K562 (cell line): ENCODE measurements at regions of chr10 and their contacts with region 1.

Region 1: GRCh38 chr10:110210674-110211464 is 3.5 kb downstream of the MXI1 start:
- DNase-seq: peak; percentile 89 to 97 (median 94)
- ATAC-seq: peak; percentile 70
- H3K4me3 ChIP-seq: peak overlapping the region; percentile 59
- H3K27ac ChIP-seq: peak overlapping the region; percentile 93
- H3K4me1 ChIP-seq: peaks cover 30 to 40% of the 10 kb centered on the region in 2 experiments; a peak in 4 of 5 replicates
- H3K27me3 ChIP-seq: no peaks in the 10 kb centered on the region
- CTCF ChIP-seq: no peak
- EP300 ChIP-seq: no peak
- POLR2A ChIP-seq: peak; percentile 63
- RAD21 ChIP-seq: 0 out of 4 replicates have a peak, but pooled peaks of 1 of the 2 experiments have one; percentile 2

Region 2: GRCh38 chr10:109883859-109884771 is 326.8 kb before region 1 on chr10:
- CTCF ChIA-PET with region 1: no interaction called
- POLR2A ChIA-PET with region 1: no interaction called
- in situ Hi-C with region 1: no loop called
- intact Hi-C with region 1: no loop called
- DNase-seq: peak; percentile 74 to 83 (median 74)
- ATAC-seq: peak; percentile 96
- H3K4me3 ChIP-seq: no peak overlapping the region
- H3K27ac ChIP-seq: no peak overlapping the region; the same call in 2 of the 3 replicates
- H3K4me1 ChIP-seq: peaks cover 0 to 3% of the 10 kb centered on the region in 2 experiments; a peak in 2 of 5 replicates
- H3K27me3 ChIP-seq: no peaks in the 10 kb centered on the region
- CTCF ChIP-seq: peak; percentile 88 to 94 (median 92)
- EP300 ChIP-seq: no peak
- POLR2A ChIP-seq: no peak
- RAD21 ChIP-seq: peak; percentile 78 to 85

Region 3: GRCh38 chr10:110007701-110008517 is 203.0 kb before region 1 on chr10 and contains the start of gene ADD3:
- CTCF ChIA-PET with region 1: no interaction called
- POLR2A ChIA-PET with region 1: no interaction called
- in situ Hi-C with region 1: no loop called
- intact Hi-C with region 1: loop called (anchors 10 kb)
- DNase-seq: peak; percentile 94 to 97 (median 96)
- ATAC-seq: peak; percentile 82
- H3K4me3 ChIP-seq: peak within 1 kb of the TSS; percentile 92
- H3K27ac ChIP-seq: peak within 1 kb of the TSS; percentile 92
- H3K4me1 ChIP-seq: peaks cover 15 to 32% of the 10 kb centered on the region in 2 experiments
- H3K27me3 ChIP-seq: no peaks in the 10 kb centered on the region
- CTCF ChIP-seq: no peak
- EP300 ChIP-seq: no peak
- POLR2A ChIP-seq: peak; percentile 66; the same call in 1 of the 2 replicates
- RAD21 ChIP-seq: no peak
- polyA plus RNA-seq, gene ADD3: 13.2 to 15.1 TPM

Region 4: GRCh38 chr10:110081911-110082310 is 129.0 kb before region 1 on chr10:
- CTCF ChIA-PET with region 1: no interaction called
- POLR2A ChIA-PET with region 1: no interaction called
- in situ Hi-C with region 1: no loop called
- intact Hi-C with region 1: loop called (anchors 5 kb)
- DNase-seq: peak in 2 of 4 experiments; percentile 30 to 61
- ATAC-seq: peak; percentile 55
- H3K4me3 ChIP-seq: no peak overlapping the region
- H3K27ac ChIP-seq: peak overlapping the region; percentile 91
- H3K4me1 ChIP-seq: peaks cover 11 to 47% of the 10 kb centered on the region in 2 experiments; a peak in 4 of 5 replicates
- H3K27me3 ChIP-seq: no peaks in the 10 kb centered on the region
- CTCF ChIP-seq: no peak
- EP300 ChIP-seq: no peak
- POLR2A ChIP-seq: no peak
- RAD21 ChIP-seq: no peak

Region 5: GRCh38 chr10:110137142-110137545 is 73.7 kb before region 1 on chr10:
- CTCF ChIA-PET with region 1: no interaction called
- POLR2A ChIA-PET with region 1: interaction called, 4 read pairs
- in situ Hi-C with region 1: no loop called
- intact Hi-C with region 1: loop called (anchors 5 kb)
- DNase-seq: peak; percentile 40 to 54 (median 42)
- ATAC-seq: peak; percentile 86
- H3K4me3 ChIP-seq: no peak overlapping the region
- H3K27ac ChIP-seq: 0 out of 3 replicates have a peak overlapping the region, but pooled peaks have one; percentile 21
- H3K4me1 ChIP-seq: peaks cover 0 to 2% of the 10 kb centered on the region in 2 experiments; a peak in 2 of 5 replicates
- H3K27me3 ChIP-seq: no peaks in the 10 kb centered on the region
- CTCF ChIP-seq: peak; percentile 68 to 79 (median 71)
- EP300 ChIP-seq: no peak
- POLR2A ChIP-seq: no peak
- RAD21 ChIP-seq: peak; percentile 85 to 88

Region 6: GRCh38 chr10:110147961-110148360 is 62.9 kb before region 1 on chr10:
- CTCF ChIA-PET with region 1: no interaction called
- POLR2A ChIA-PET with region 1: no interaction called
- in situ Hi-C with region 1: no loop called
- intact Hi-C with region 1: no loop called
- DNase-seq: no peak
- ATAC-seq: no peak
- H3K4me3 ChIP-seq: no peak overlapping the region
- H3K27ac ChIP-seq: no peak overlapping the region
- H3K4me1 ChIP-seq: peaks cover 12 to 26% of the 10 kb centered on the region in 2 experiments; a peak in 4 of 5 replicates
- H3K27me3 ChIP-seq: peaks cover 0 to 4% of the 10 kb centered on the region in 2 experiments; a peak in 1 of 5 replicates
- CTCF ChIP-seq: no peak
- EP300 ChIP-seq: no peak
- POLR2A ChIP-seq: no peak
- RAD21 ChIP-seq: no peak

Region 7: GRCh38 chr10:110225756-110226542 is 15.1 kb after region 1 on chr10:
- CTCF ChIA-PET with region 1: interaction called, 4 read pairs
- POLR2A ChIA-PET with region 1: interaction called, 61 read pairs
- in situ Hi-C with region 1: no loop called
- intact Hi-C with region 1: loop called (anchors 1 kb)
- DNase-seq: peak; percentile 75 to 91 (median 81)
- ATAC-seq: peak; percentile 75
- H3K4me3 ChIP-seq: peak overlapping the region; percentile 80
- H3K27ac ChIP-seq: peak overlapping the region; percentile 90
- H3K4me1 ChIP-seq: peaks cover 31% of the 10 kb centered on the region in 2 experiments; a peak in 4 of 5 replicates
- H3K27me3 ChIP-seq: no peaks in the 10 kb centered on the region
- CTCF ChIP-seq: peak; percentile 52 to 71 (median 54); a peak in 5 of 6 replicates
- EP300 ChIP-seq: no peak
- POLR2A ChIP-seq: peak; percentile 67
- RAD21 ChIP-seq: peak; percentile 36 to 61

Region 8: DNA sequence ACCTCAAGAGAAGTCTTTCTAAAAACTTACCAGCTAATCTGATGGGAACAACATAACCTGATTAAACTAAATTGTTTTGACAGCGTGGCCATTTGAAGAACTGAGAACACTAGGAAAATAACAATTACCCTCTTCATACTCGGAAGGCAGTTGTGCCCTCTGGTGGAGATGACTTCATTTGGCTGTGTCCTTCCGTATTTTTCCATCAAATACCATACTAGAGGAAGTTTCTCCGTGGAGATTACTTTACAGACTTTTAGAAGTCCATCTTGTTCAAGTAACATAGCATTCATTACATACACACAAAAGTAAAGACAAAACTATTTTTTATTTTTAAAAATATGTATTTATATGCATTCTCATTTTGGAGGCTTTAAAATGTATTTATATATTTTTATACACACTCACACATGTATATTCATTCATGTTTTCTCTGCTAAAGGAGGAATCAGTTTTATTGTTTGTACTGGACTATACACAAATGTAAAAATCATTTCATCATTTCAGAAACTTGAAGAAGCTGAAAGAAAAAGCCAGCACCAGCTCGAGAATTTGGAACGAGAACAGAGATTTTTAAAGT is 68.6 kb after region 1 on chr10:
- CTCF ChIA-PET with region 1: interaction called, 3 read pairs
- POLR2A ChIA-PET with region 1: no interaction called
- in situ Hi-C with region 1: no loop called
- intact Hi-C with region 1: loop called (anchors 1 kb)
- DNase-seq: peak; percentile 12 to 69 (median 20)
- ATAC-seq: peak; percentile 83
- H3K4me3 ChIP-seq: no peak overlapping the region
- H3K27ac ChIP-seq: no peak overlapping the region
- H3K4me1 ChIP-seq: peaks cover 0 to 10% of the 10 kb centered on the region in 2 experiments; a peak in 3 of 5 replicates
- H3K27me3 ChIP-seq: no peaks in the 10 kb centered on the region
- CTCF ChIP-seq: peak; percentile 50 to 76 (median 66)
- EP300 ChIP-seq: no peak
- POLR2A ChIP-seq: no peak
- RAD21 ChIP-seq: peak; percentile 85 to 92